Caco-2 (cell line): ENCODE measurements at regions of chr20 and their contacts with region 1.

Region 1: GRCh38 chr20:45044084-45044573 is 56.8 kb downstream of the KCNS1 start:
- DNase-seq: peak; percentile 67 to 80
- H3K4me3 ChIP-seq: no peak overlapping the region
- H3K4me3 Mint-ChIP-seq: no peak overlapping the region
- H3K27ac Mint-ChIP-seq: no peak overlapping the region
- H3K4me1 ChIP-seq: peaks cover 4% of the 10 kb centered on the region; the same call in 1 of the 2 replicates
- H3K4me1 Mint-ChIP-seq: peaks cover 6% of the 10 kb centered on the region
- H3K27me3 ChIP-seq: no peaks in the 10 kb centered on the region
- H3K27me3 Mint-ChIP-seq: no peaks in the 10 kb centered on the region
- CTCF ChIP-seq: peak; percentile 97 to 99

Region 2: GRCh38 chr20:44776977-44777376 is 267.2 kb before region 1 on chr20:
- CTCF ChIA-PET with region 1: no interaction called
- POLR2A ChIA-PET with region 1: no interaction called
- intact Hi-C with region 1: no loop called
- DNase-seq: peak; percentile 59 to 82
- H3K4me3 ChIP-seq: no peak overlapping the region
- H3K4me3 Mint-ChIP-seq: no peak overlapping the region
- H3K27ac Mint-ChIP-seq: no peak overlapping the region
- H3K4me1 ChIP-seq: no peaks in the 10 kb centered on the region
- H3K4me1 Mint-ChIP-seq: no peaks in the 10 kb centered on the region
- H3K27me3 ChIP-seq: no peaks in the 10 kb centered on the region
- H3K27me3 Mint-ChIP-seq: peaks cover 9% of the 10 kb centered on the region
- CTCF ChIP-seq: no peak

Region 3: GRCh38 chr20:45011108-45011526 is 33.0 kb before region 1 on chr20:
- CTCF ChIA-PET with region 1: interaction called, 22 read pairs
- POLR2A ChIA-PET with region 1: interaction called, 4 read pairs
- intact Hi-C with region 1: loop called (anchors 1 kb)
- DNase-seq: peak; percentile 70 to 80
- H3K4me3 ChIP-seq: no peak overlapping the region
- H3K4me3 Mint-ChIP-seq: no peak overlapping the region
- H3K27ac Mint-ChIP-seq: peak overlapping the region; percentile 1
- H3K4me1 ChIP-seq: peaks cover 44% of the 10 kb centered on the region
- H3K4me1 Mint-ChIP-seq: peaks cover 40% of the 10 kb centered on the region
- H3K27me3 ChIP-seq: no peaks in the 10 kb centered on the region
- H3K27me3 Mint-ChIP-seq: no peaks in the 10 kb centered on the region
- CTCF ChIP-seq: peak; percentile 89 to 96

Region 4: DNA sequence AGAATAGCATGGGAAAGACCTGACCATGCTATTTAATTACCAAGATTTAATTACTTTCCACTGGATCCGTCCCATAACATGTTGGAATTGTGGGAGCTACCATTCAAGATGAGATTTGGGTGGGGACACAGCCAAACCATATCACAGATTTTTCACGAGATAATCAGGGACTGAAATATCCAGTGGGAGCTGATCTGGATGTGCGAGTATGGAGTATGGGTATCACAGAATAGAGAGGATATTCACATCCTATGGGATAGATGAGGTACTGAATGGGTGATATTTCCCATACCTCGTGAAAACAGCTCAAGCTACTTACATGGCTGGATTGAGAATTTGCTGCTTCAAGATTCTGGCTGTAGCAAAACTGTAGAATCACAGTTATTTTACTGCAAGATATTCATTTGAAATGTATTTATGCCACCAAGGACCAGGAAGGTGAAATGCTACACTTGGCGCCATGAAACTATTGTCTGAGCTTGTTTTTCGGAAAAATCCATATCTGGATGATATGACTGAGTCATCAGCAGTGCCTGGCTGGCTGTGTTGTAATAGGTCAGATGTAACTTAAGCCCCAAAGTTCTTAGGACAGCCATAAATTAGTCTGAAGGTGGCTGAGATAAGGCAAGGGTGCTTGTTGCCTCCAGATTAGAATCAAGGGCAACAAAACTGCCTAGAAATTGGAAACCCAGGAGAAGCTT is 27.0 kb after region 1 on chr20:
- CTCF ChIA-PET with region 1: interaction called, 18 read pairs
- POLR2A ChIA-PET with region 1: no interaction called
- intact Hi-C with region 1: loop called (anchors 1 kb)
- DNase-seq: peak; percentile 51 to 69
- H3K4me3 ChIP-seq: no peak overlapping the region
- H3K4me3 Mint-ChIP-seq: no peak overlapping the region
- H3K27ac Mint-ChIP-seq: no peak overlapping the region
- H3K4me1 ChIP-seq: peaks cover 30% of the 10 kb centered on the region
- H3K4me1 Mint-ChIP-seq: peaks cover 32% of the 10 kb centered on the region
- H3K27me3 ChIP-seq: no peaks in the 10 kb centered on the region
- H3K27me3 Mint-ChIP-seq: no peaks in the 10 kb centered on the region
- CTCF ChIP-seq: no peak

Region 5: DNA sequence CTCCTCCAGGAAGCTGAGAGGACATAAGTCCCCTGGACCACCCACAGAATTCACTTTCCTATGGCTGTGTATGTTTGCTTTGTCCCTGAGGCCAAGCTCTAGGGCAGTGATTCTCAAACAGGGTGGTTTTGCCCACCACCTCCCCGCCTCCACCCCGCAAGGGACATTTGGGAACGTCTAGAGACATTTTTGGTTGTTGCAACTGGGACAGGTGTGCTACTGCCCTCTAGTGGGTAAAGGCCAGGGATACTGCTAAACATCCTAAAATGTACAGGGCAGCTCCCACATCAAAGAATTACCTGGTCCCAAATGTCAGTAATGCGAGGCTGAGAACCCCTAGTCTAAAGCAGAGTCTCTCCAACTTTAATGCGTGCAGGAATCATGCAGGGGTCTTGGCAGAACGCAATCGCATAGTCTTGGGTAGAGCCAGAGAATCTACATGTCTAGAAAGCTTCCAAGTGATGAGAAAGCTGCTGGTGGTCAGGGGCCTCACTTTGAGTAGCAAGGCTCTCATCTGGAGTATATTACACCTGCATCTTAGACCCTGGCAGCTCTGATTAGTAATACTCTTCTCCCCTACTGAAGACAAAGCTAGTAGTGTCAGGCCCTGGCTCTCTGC is 51.7 kb after region 1 on chr20:
- CTCF ChIA-PET with region 1: interaction called, 203 read pairs
- POLR2A ChIA-PET with region 1: interaction called, 13 read pairs
- intact Hi-C with region 1: loop called (anchors 1 kb)
- DNase-seq: peak; percentile 84 to 87
- H3K4me3 ChIP-seq: no peak overlapping the region
- H3K4me3 Mint-ChIP-seq: no peak overlapping the region
- H3K27ac Mint-ChIP-seq: no peak overlapping the region
- H3K4me1 ChIP-seq: no peaks in the 10 kb centered on the region
- H3K4me1 Mint-ChIP-seq: no peaks in the 10 kb centered on the region
- H3K27me3 ChIP-seq: no peaks in the 10 kb centered on the region
- H3K27me3 Mint-ChIP-seq: no peaks in the 10 kb centered on the region
- CTCF ChIP-seq: peak; percentile 95 to 99

Region 6: DNA sequence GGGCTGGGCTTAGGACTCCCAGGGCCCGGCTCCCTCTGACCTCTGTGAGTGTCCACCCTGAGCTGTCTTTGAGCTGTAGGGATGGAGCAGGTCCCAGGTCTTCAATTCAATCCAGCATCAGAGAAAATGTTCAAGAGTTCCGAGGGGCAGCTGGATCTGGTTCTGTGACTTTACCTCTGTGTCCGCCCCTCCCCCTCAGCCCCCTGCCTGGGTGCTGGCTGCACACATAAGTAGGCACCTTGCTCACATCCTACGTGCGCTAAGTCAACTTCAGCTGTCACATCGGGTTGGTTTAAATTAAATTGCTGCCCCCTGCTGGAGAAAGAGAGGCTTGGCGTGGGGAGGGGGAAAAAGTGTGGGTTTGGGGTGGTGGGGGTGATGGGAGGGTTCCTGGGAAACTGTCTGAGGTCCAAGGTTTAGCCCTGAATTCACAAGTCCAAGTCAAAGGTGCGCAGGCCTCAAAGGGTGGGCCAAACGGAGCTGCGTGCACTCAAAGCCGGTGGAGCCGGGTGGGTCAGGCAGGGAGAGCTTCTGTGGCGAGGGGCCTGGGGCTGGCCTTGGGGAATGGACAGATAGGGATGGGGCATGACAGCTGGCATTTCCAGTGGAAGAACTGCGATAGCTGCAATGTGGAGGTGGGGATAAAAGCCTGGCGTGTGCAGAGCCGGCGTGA is 67.8 kb after region 1 on chr20:
- CTCF ChIA-PET with region 1: interaction called, 71 read pairs
- POLR2A ChIA-PET with region 1: no interaction called
- intact Hi-C with region 1: loop called (anchors 1 kb)
- DNase-seq: peak in 1 of 2 experiments; percentile 53
- H3K4me3 ChIP-seq: no peak overlapping the region
- H3K4me3 Mint-ChIP-seq: no peak overlapping the region
- H3K27ac Mint-ChIP-seq: no peak overlapping the region
- H3K4me1 ChIP-seq: no peaks in the 10 kb centered on the region
- H3K4me1 Mint-ChIP-seq: peaks cover 6% of the 10 kb centered on the region
- H3K27me3 ChIP-seq: no peaks in the 10 kb centered on the region
- H3K27me3 Mint-ChIP-seq: peaks cover 4% of the 10 kb centered on the region
- CTCF ChIP-seq: peak; percentile 64 to 83